Vagina (tissue), 2 donors: ENCODE measurements at regions of chr1 and their contacts with region 1.

Region 1: DNA sequence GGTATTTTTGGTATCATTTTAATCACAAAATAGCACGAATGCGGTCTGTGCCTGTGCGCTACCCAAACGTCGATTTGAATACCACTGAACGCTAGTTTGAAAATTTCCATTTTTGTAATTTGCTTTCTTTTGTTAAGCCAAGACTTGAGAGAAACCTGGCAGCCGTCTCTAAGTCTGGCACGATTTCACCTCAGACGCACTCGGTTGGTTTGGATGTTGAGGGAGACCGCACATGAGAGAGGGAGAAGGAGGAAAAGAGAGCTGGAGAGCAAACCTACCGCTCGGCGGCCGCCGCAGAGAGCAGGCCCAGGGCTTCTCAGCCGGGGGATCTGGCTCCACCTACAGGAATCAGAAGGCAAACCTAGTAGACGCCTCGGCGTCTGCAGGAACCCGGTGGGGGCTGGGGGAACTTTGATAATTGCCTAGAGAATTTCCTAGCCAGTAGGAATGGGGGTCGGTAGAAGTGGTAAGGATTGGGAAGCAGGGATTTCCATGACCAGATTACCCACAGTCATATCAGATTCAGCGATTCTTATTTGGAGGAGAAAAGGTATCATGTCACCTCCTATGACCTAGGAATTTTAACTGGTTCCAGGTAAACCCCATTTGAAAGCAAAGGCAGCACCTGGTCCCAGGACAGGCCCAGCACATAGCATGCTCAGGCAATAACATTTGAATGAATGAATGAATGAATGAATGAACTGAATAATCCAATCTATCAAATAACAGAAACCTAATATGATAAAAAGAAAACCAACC is 83.2 kb downstream of the TM2D1 start:
- DNase-seq: no peak
- H3K4me3 ChIP-seq: no peak overlapping the region
- H3K27ac ChIP-seq: no peak overlapping the region
- H3K4me1 ChIP-seq: peaks cover 27% of the 10 kb centered on the region
- H3K27me3 ChIP-seq: no peaks in the 10 kb centered on the region
- CTCF ChIP-seq: peak; percentile 7 to 56 (median 31)
- POLR2A ChIP-seq: no peak

Region 2: DNA sequence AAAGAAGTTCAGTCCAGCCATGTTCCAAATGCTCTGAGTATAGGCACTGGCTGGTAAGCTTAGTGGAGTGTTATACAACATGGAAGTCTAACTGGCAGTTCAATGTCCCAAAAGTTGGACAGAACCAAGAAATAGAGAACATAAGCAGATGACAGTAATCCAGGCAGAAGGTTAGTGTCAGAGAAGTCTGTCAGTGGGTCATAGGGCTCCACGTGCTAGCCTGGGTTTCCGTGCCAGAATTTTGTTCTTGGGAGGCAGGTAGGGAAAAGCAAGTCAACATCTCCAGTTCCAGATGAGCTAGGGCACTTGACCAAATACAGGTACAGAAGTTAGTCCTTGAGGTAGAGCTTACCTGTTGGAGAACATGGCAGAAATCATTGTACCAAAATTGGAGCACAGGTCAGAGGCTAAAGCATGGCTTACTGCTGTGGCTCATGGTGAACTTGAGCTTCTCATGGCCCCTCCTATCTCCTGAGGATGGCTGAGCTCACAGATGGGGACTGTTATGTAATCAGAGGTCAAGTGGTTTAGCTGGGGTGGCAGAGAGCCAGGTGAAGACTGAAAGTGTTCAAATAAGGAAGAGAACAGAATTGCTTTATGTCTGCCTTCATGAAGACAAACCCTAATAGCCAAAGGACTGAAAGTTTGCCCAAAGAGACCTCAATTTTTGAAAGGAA is 388.6 kb before region 1 on chr1:
- intact Hi-C with region 1: no loop called
- DNase-seq: no peak
- H3K4me3 ChIP-seq: no peak overlapping the region
- H3K27ac ChIP-seq: no peak overlapping the region
- H3K4me1 ChIP-seq: peaks cover 34% of the 10 kb centered on the region
- H3K27me3 ChIP-seq: no peaks in the 10 kb centered on the region
- CTCF ChIP-seq: no peak
- POLR2A ChIP-seq: no peak

Region 3: DNA sequence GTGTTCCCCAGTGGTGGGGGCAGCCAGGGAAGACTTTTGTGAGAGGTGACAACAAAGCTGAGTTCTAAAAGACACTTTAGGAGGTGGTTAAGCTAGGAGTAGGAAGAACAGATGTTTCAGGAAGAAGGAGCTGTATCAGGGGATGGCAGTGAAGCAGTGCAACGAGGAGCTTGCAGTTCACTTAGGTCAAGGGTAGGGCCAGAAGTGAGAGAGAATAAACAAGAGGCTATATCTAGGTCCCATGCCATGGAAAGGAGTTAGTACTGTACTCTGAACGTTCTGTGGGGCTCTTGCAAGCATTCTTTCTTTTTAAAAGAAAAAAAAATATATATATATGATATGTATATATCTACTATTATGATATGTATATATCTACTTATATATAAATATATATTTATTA is 315.0 kb before region 1 on chr1:
- intact Hi-C with region 1: loop called (anchors 5 kb)
- DNase-seq: no peak
- H3K4me3 ChIP-seq: no peak overlapping the region
- H3K27ac ChIP-seq: no peak overlapping the region
- H3K4me1 ChIP-seq: peaks cover 6% of the 10 kb centered on the region
- H3K27me3 ChIP-seq: no peaks in the 10 kb centered on the region
- CTCF ChIP-seq: no peak
- POLR2A ChIP-seq: no peak

Region 4: DNA sequence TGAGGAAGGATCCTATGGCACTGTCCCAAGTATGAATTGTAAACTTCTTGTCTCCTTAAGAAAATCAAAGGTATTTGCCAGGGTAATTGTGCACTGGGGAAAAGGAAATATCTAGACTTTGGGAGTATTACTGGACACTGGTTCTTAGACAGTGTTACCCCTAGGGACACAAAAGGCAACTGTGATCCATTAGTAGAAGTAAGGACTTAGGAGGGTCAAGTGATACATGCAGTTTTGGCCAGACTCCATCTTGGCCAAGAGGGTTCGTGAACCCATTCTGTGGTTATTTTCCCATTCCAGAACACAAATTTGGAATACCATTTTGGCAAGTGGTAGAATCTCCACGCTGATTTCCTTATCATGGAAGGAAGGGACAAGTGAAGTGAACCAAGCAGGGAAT is 14.9 kb before region 1 on chr1:
- intact Hi-C with region 1: loop called (anchors 1 kb)
- DNase-seq: no peak
- H3K4me3 ChIP-seq: no peak overlapping the region
- H3K27ac ChIP-seq: no peak overlapping the region
- H3K4me1 ChIP-seq: no peaks in the 10 kb centered on the region
- H3K27me3 ChIP-seq: no peaks in the 10 kb centered on the region
- CTCF ChIP-seq: no peak
- POLR2A ChIP-seq: no peak

Region 5: GRCh38 chr1:61674221-61674620 is 32.5 kb after region 1 on chr1:
- intact Hi-C with region 1: no loop called
- DNase-seq: no peak
- H3K4me3 ChIP-seq: no peak overlapping the region
- H3K27ac ChIP-seq: no peak overlapping the region
- H3K4me1 ChIP-seq: no peaks in the 10 kb centered on the region
- H3K27me3 ChIP-seq: no peaks in the 10 kb centered on the region
- CTCF ChIP-seq: no peak
- POLR2A ChIP-seq: no peak